ENCODE measurements at regions of chr13 and their contacts with region 1.

Region 1: DNA sequence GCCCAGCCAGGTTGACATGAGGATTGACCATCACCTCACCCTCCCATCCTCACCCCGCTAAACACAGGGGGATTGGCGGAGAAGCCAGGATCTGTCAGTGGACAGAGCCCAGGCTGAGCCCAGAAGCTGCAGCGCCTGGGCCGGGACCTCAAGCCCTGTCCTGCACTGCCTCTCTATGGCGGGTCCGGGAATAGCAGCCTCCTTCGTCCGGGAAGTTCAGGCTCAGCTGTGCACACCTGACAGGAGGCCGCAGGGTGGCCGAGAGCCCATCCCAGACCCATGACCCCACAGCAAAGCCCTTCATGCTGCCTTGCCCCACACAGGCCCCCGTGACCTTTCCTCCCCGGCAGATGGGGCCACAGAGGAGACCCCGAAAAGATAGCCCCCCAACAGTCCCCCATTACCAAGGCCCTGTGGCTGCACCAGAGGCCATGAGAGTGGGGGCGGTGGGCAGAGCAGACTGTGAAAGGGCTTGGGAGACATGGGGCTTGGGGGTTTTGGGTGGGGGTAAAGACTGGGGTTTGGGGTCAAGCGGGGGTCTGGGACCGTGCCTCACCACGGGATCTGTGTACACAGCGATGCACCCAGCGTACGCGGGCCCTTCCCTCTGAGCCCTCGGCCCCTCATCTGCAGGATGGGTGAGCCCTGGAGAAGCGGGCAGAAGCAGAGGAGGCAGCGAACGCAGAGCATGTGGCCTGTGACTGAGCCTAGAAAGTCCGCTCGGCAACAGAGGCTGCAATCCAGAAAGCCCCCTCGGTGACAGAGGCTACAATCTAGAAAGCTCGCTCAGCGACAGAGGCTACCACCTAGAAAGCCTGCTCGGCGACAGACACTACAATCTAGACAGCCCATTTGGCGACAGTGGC is 68.1 kb downstream of the SPACA7 start:
- DNase-seq: peak; percentile 56
- ATAC-seq: peak; percentile 79 to 81

Region 2: DNA sequence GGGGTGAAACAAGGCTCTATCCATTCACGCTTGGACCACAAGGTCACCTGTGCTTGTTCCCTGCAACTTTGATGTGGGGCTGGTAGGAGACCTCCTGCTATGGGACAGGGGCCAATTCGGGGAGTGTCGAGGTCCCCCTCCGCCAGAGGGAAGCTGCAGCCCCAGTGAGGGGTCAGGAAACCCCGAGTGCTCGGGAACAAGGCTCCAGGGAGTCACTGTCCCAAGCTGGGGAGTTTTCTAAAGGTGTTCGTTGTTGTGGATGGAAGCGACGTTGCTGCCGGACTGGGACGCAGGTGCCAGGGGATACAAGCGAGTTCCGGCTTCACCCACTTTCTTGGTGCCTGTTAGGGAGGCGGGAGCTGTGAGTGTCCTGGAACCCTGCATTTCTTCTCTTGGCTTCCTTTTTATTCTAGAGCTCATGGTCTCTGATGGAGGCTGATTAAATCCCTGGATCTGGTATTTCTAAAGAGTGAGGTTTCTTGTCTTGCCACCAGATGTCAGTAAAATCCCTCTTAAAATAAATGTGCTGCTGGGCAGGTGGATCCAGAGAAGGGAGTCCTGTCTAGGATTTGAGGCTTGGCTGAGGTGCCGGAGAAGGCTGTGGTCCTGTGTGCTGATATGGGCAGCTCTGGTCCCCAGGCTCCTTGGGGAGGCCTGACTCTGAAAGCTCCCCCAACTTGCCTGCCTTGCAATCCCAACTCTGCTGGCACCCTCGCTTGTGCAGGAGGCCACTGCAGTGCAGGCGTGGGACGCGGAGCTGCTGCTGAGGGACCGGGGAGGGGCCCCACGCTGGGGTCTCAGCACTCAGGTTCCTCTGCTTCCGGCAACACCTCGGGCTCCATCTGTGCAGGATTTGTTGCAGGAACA is 969.9 kb before region 1 on chr13:
- intact Hi-C with region 1: loop called (anchors 2 to 5 kb)
- DNase-seq: no peak
- ATAC-seq: peak; percentile 56 to 61

Region 3: DNA sequence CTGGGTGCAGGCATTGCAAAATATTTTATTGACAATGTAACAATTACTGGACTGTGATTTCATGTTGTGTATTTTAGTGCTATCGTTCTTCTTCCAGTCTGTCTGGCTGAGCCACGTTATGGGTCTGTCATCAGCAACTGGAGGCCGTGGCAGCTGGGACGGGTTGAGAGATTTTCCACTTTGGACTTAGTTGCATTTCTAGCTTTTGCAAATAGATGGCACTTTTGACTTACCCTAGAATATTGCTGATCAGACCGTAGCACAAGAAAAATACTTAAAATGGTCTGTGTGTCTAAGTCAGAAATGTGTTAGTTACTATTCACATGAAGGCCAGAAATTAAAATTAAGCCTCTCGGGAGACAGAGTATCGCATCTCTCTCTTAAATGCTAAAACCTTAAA is 912.7 kb before region 1 on chr13:
- intact Hi-C with region 1: loop called in 1 of 2 experiments (anchors 5 kb)
- DNase-seq: no peak
- ATAC-seq: peak; percentile 33 to 53